ENCODE measurements at regions of chr10 and their contacts with region 1.

Region 1: DNA sequence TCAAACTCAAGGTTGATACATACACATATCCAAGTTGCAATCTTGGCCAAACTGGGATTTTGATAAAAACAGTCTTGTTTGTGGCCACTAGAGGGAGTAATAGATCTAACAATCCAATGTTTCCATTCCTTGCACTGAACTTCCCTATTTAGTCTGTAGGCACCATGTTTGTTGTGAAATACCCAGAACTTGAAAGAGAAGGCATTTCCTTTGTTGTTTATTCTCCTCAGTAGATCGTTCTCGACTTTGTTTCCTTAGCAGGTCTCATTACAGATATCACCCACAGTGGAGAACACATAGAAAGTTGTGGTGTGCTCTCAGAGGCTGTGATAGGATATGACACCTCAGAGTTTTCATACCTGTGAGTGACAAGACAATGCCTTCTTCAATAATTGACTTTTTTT is 70.3 kb upstream of the MXI1 start:
- DNase-seq: no peak
- ATAC-seq: peak; percentile 67
- H3K4me3 Mint-ChIP-seq: no peak overlapping the region
- H3K27ac Mint-ChIP-seq: peak overlapping the region; percentile 25; the same call in 1 of the 2 replicates
- H3K4me1 Mint-ChIP-seq: 0 out of 2 replicates have a peak, but pooled peaks cover 3% of the 10 kb centered on the region
- H3K27me3 Mint-ChIP-seq: no peaks in the 10 kb centered on the region
- CTCF ChIP-seq: peak; percentile 60

Region 2: GRCh38 chr10:110036640-110037039 is 100.5 kb before region 1 on chr10:
- CTCF ChIA-PET with region 1: no interaction called
- POLR2A ChIA-PET with region 1: no interaction called
- DNase-seq: no peak
- ATAC-seq: no peak
- H3K4me3 Mint-ChIP-seq: no peak overlapping the region
- H3K27ac Mint-ChIP-seq: no peak overlapping the region
- H3K4me1 Mint-ChIP-seq: peaks cover 57% of the 10 kb centered on the region
- H3K27me3 Mint-ChIP-seq: no peaks in the 10 kb centered on the region
- CTCF ChIP-seq: no peak

Region 3: GRCh38 chr10:110151986-110152385 is 14.8 kb after region 1 on chr10:
- CTCF ChIA-PET with region 1: interaction called, 10 read pairs
- POLR2A ChIA-PET with region 1: no interaction called
- DNase-seq: no peak
- ATAC-seq: no peak; the same call in 1 of the 2 replicates
- H3K4me3 Mint-ChIP-seq: no peak overlapping the region
- H3K27ac Mint-ChIP-seq: no peak overlapping the region
- H3K4me1 Mint-ChIP-seq: peaks cover 16% of the 10 kb centered on the region
- H3K27me3 Mint-ChIP-seq: peaks cover 68% of the 10 kb centered on the region
- CTCF ChIP-seq: no peak

Region 4: DNA sequence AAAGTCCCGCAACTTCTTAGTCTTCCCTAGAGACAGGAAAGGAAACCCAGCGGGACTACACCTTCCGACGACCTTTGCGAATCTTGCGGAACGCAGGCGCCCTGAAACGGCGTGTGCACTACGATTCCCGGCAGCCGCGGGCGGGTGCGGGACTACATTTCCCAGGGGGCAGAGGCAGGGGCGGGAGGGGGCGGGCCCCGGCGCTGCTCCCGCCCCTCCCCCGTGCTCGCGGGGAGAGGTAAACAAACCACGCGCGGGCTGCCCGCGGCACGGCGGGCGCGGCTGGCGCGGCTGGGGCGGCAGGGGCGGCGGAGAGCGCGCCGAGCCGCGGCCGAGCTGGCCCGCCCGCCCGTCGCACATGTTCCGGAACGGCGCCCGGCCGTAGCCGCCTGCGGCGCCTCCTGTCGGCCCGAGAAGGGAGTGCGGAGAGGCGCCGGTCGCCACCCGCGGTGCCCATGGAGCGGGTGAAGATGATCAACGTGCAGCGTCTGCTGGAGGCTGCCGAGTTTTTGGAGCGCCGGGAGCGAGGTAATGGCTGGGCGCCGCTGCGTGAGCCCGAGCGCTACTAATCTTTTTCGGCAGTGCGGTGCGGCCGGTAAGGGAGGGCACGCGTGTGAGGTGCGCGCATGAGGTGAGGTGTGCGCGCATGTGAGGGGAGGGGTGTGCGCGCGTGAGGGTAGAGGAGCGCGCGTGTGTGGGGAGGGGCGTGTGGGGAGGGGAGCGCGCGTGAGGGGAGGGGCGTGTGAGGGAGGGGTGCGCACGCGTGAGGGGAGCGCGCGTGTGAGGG is 88.8 kb after region 1 on chr10:
- CTCF ChIA-PET with region 1: interaction called, 36 read pairs
- POLR2A ChIA-PET with region 1: no interaction called
- DNase-seq: peak; percentile 90
- ATAC-seq: peak; percentile 65
- H3K4me3 Mint-ChIP-seq: peak overlapping the region; percentile 96
- H3K27ac Mint-ChIP-seq: peak overlapping the region; percentile 98
- H3K4me1 Mint-ChIP-seq: peaks cover 40% of the 10 kb centered on the region
- H3K27me3 Mint-ChIP-seq: peaks cover 27% of the 10 kb centered on the region
- CTCF ChIP-seq: peak; percentile 56

Region 5: GRCh38 chr10:110279407-110279986 is 142.4 kb after region 1 on chr10:
- CTCF ChIA-PET with region 1: interaction called, 19 read pairs
- POLR2A ChIA-PET with region 1: no interaction called
- DNase-seq: peak; percentile 20
- ATAC-seq: peak; percentile 64
- H3K4me3 Mint-ChIP-seq: no peak overlapping the region
- H3K27ac Mint-ChIP-seq: peak overlapping the region; percentile 45; the same call in 1 of the 2 replicates
- H3K4me1 Mint-ChIP-seq: peaks cover 12% of the 10 kb centered on the region
- H3K27me3 Mint-ChIP-seq: no peaks in the 10 kb centered on the region
- CTCF ChIP-seq: no peak

Region 6: GRCh38 chr10:110387983-110388687 is 251.0 kb after region 1 on chr10:
- CTCF ChIA-PET with region 1: no interaction called
- POLR2A ChIA-PET with region 1: no interaction called
- DNase-seq: no peak
- ATAC-seq: peak; percentile 28
- H3K4me3 Mint-ChIP-seq: no peak overlapping the region
- H3K27ac Mint-ChIP-seq: no peak overlapping the region
- H3K4me1 Mint-ChIP-seq: peaks cover 13% of the 10 kb centered on the region
- H3K27me3 Mint-ChIP-seq: no peaks in the 10 kb centered on the region; the same call in 1 of the 2 replicates
- CTCF ChIP-seq: no peak

Measured in WTC11 (cell line).